CD4-positive, alpha-beta memory T cell (primary cell): ENCODE measurements at regions of chr6 and their contacts with region 1.

Region 1: DNA sequence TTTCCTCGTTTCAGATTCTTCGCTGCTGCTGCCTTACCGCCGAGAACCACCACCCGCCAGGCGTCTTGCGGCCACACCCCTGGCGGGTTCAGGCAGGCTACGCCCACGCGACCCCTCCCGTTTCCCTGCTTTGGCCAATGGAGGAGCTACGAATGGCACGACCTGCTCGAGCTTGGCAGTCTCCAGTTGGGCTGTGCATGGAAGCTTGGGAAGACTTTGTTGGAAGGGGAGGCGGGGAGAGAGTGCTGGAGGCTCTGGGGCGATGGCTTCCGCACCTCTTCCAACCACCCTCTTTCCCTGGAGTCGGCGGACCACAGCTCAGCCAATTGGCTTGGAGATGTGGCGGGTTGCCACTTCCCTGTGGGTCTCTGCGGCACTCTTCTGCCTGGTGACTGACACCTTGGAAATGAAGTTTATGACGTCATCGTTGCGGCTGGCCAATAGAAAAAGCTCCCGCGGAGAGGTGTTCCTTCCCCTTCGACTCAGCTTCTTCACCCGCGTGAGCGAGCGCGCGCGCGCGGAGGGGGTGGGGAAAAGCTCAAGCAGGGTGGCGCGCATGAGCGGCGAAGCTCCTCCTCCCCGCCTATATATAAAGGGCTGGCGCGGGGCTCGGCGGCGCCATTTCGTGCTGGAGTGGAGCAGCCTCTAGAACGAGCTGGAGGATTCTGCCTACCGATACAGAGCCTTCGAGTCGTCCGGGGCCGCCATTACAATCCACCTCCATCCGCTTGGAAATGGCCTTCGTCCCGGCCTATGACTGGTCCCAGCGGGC is 3.4 kb downstream of the BRD2 start:
- DNase-seq: peak; percentile 100
- H3K4me3 ChIP-seq: peak overlapping the region; percentile 90 to 95
- H3K4me3 Mint-ChIP-seq: peak overlapping the region; percentile 91 to 99 (median 95)
- H3K27ac ChIP-seq: peak overlapping the region; percentile 95
- H3K27ac Mint-ChIP-seq: peak overlapping the region; percentile 99 to 100 (median 100)
- H3K4me1 ChIP-seq: peaks cover 36% of the 10 kb centered on the region
- H3K4me1 Mint-ChIP-seq: peaks cover 26 to 84% (median 33%) of the 10 kb centered on the region in 4 donors
- H3K27me3 ChIP-seq: no peaks in the 10 kb centered on the region
- H3K27me3 Mint-ChIP-seq: no peaks in the 10 kb centered on the region

Region 2: GRCh38 chr6:32190054-32190851 is 781.5 kb before region 1 on chr6 and contains the start of gene PBX2:
- CTCF ChIA-PET with region 1: interaction called, 3 read pairs
- POLR2A ChIA-PET with region 1: interaction called, 18 read pairs
- intact Hi-C with region 1: loop called (anchors 2 kb)
- DNase-seq: peak; percentile 73 to 85 (median 76)
- H3K4me3 ChIP-seq: peak within 1 kb of the TSS; percentile 81 to 99
- H3K4me3 Mint-ChIP-seq: peak within 1 kb of the TSS; percentile 98 to 100 (median 99)
- H3K27ac ChIP-seq: peak within 1 kb of the TSS; percentile 98
- H3K27ac Mint-ChIP-seq: peak within 1 kb of the TSS; percentile 93 to 100 (median 99)
- H3K4me1 ChIP-seq: peaks cover 64% of the 10 kb centered on the region
- H3K4me1 Mint-ChIP-seq: peaks cover 48 to 85% (median 54%) of the 10 kb centered on the region in 4 donors
- H3K27me3 ChIP-seq: no peaks in the 10 kb centered on the region
- H3K27me3 Mint-ChIP-seq: no peaks in the 10 kb centered on the region
- total RNA-seq, gene PBX2: 188 to 192 TPM

Region 3: GRCh38 chr6:32853541-32854375 is 118.0 kb before region 1 on chr6 and contains the starts of genes PSMB9 and TAP1:
- CTCF ChIA-PET with region 1: interaction called, 14 read pairs
- POLR2A ChIA-PET with region 1: interaction called, 167 read pairs
- intact Hi-C with region 1: no loop called
- DNase-seq: peak; percentile 94 to 98 (median 96)
- H3K4me3 ChIP-seq: peak within 1 kb of the TSS; percentile 93 to 98
- H3K4me3 Mint-ChIP-seq: peak within 1 kb of the TSS; percentile 98 to 100 (median 99)
- H3K27ac ChIP-seq: peak within 1 kb of the TSS; percentile 100
- H3K27ac Mint-ChIP-seq: peak within 1 kb of the TSS; percentile 99 to 100 (median 100)
- H3K4me1 ChIP-seq: peaks cover 76% of the 10 kb centered on the region
- H3K4me1 Mint-ChIP-seq: peaks cover 57 to 92% (median 66%) of the 10 kb centered on the region in 4 donors
- H3K27me3 ChIP-seq: no peaks in the 10 kb centered on the region
- H3K27me3 Mint-ChIP-seq: no peaks in the 10 kb centered on the region
- total RNA-seq, gene PSMB9: 141 to 144 TPM
- total RNA-seq, gene TAP1: 136 to 141 TPM

Region 4: DNA sequence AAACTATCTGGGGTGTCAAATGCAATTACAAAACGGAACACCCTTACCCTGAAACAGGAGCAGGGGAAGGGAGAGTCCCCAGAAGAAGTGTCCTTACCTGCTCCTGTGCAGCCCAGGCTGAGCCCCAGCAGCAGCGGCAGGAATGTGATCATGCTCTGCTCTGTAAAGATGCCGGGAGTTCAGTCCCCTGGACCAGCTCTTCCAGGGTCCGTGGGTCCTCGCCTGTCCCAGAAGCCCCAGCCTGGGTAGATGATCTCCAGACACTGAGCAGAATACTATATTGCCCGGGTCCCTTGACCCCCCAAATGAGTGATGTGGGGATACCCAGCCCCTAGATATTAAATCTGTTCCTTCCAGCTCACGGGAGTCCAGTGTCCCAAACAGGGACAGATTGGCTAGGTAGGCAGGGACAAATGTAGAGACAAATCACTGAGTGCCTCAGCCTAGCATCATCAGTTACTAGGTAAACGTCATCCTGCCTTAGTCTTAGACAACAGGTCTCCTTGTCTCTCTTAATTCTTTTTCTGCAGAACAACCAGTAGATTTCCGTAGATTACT is 31.0 kb before region 1 on chr6 and contains the start of gene HLA-DMB:
- CTCF ChIA-PET with region 1: interaction called, 631 read pairs
- POLR2A ChIA-PET with region 1: interaction called, 698 read pairs
- intact Hi-C with region 1: loop called (anchors 1 kb)
- DNase-seq: peak; percentile 68 to 82 (median 70)
- H3K4me3 ChIP-seq: peak within 1 kb of the TSS; percentile 57 to 73
- H3K4me3 Mint-ChIP-seq: peak within 1 kb of the TSS; percentile 89 to 97 (median 92)
- H3K27ac ChIP-seq: peak within 1 kb of the TSS; percentile 68
- H3K27ac Mint-ChIP-seq: peak within 1 kb of the TSS; percentile 90 to 99 (median 94)
- H3K4me1 ChIP-seq: peaks cover 57% of the 10 kb centered on the region
- H3K4me1 Mint-ChIP-seq: peaks cover 46 to 60% (median 53%) of the 10 kb centered on the region in 4 donors
- H3K27me3 ChIP-seq: no peaks in the 10 kb centered on the region
- H3K27me3 Mint-ChIP-seq: no peaks in the 10 kb centered on the region
- total RNA-seq, gene HLA-DMB: 7.9 to 8.1 TPM

Region 5: DNA sequence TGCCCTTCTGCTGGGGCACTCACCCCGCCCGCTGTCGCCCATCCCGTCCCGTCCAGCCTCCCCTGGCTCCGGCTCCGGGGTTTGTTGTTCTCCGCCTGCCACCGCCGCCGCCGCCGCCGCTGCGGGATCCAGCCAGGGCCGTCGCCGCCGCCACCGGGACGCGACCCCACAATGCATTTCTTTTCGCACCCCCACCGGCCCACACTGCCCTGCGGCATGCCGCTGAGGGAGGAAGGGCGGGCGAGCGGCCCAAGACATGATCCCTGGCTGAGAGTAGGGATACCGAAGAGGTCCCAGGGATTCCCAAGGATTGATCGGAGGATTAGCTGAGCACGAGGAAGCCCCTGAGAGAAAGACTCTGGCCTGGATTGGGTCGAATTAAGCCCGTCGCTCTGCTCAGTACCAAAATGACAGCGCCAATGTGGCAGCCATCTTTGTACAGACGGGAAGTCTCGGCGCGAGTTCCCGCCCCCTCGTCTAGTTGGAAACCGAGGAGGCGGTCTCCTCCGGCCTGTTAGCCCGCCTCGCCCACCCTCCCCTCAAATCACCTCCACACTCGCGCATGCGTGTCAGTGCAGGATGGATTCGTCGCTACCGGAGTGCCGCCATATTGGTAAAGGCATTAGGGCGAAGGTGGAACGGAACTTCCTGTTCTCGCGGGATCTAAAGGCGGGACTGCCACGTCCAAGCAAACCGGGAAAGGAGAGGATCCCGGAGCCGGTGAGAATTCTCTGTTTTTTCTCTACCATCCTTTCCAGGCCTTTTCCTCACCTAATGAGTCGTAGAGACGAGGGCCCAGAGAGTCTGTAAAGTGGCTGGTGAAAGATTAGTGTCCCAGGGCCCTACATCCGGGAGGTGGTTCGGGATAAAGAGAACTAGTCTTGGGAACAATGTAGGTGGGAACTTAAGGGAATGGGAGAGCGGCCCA is 228.7 kb after region 1 on chr6 and contains the starts of genes RXRB and SLC39A7:
- CTCF ChIA-PET with region 1: no interaction called
- POLR2A ChIA-PET with region 1: interaction called, 5 read pairs
- intact Hi-C with region 1: loop called (anchors 1 kb)
- DNase-seq: peak; percentile 95 to 99 (median 98)
- H3K4me3 ChIP-seq: peak within 1 kb of the TSS; percentile 99
- H3K4me3 Mint-ChIP-seq: peak within 1 kb of the TSS; percentile 98 to 100 (median 99)
- H3K27ac ChIP-seq: peak within 1 kb of the TSS; percentile 88
- H3K27ac Mint-ChIP-seq: peak within 1 kb of the TSS; percentile 96 to 99 (median 98)
- H3K4me1 ChIP-seq: peaks cover 62% of the 10 kb centered on the region
- H3K4me1 Mint-ChIP-seq: peaks cover 45 to 82% (median 64%) of the 10 kb centered on the region in 4 donors
- H3K27me3 ChIP-seq: no peaks in the 10 kb centered on the region
- H3K27me3 Mint-ChIP-seq: no peaks in the 10 kb centered on the region
- total RNA-seq, gene RXRB: 89.2 to 94.3 TPM
- total RNA-seq, gene SLC39A7: 40.8 to 40.9 TPM

Region 6: DNA sequence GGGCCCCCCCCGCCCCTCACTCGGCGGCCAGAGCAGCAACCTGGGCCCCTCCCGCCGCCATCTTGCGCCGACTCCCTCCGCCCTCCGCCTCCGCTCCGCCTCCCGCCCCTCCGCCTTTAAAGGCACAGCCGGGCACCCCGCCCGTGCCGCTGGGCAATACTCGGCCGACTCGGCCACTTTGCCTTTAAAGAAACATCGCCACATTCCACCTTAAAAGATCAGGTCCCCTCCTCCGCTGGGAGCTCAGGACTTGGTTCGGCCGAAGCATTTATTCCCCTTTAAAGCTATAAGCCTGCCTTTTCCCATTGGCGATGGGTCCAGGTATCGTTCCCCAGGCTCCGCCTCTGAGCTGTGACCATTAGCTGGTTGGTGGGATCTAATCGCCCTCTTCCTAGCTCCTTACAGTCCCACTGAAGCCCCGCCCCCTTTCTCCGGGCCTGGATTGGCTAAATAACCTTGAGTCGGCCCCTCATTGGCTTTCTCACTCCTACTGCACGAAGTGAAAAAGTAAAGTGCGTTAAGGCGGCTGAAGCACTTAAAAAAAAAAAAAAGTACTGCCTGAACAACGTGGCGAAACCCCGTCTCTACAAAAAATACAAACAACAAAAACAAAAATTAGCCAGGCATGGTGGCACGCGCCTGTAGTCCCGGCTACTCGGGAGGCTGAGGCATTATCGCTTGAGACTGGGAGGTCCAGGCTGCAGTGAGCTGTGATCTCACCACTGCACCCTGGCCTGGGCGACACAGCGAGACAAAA is 346.1 kb after region 1 on chr6 and contains the start of gene ZBTB22:
- CTCF ChIA-PET with region 1: no interaction called
- POLR2A ChIA-PET with region 1: interaction called, 5 read pairs
- intact Hi-C with region 1: loop called (anchors 2 kb)
- DNase-seq: peak; percentile 96 to 99 (median 97)
- H3K4me3 ChIP-seq: peak within 1 kb of the TSS; percentile 73 to 100
- H3K4me3 Mint-ChIP-seq: peak within 1 kb of the TSS; percentile 98 to 100 (median 99)
- H3K27ac ChIP-seq: peak within 1 kb of the TSS; percentile 83
- H3K27ac Mint-ChIP-seq: peak within 1 kb of the TSS; percentile 98 to 99 (median 98)
- H3K4me1 ChIP-seq: peaks cover 73% of the 10 kb centered on the region
- H3K4me1 Mint-ChIP-seq: peaks cover 40 to 100% (median 62%) of the 10 kb centered on the region in 4 donors
- H3K27me3 ChIP-seq: no peaks in the 10 kb centered on the region
- H3K27me3 Mint-ChIP-seq: no peaks in the 10 kb centered on the region
- total RNA-seq, gene ZBTB22: 28.6 to 28.7 TPM